ENCODE measurements at regions of chrX and their contacts with region 1.

Region 1: GRCh38 chrX:119729408-119730201 is 28.8 kb upstream of the SOWAHD start:
- DNase-seq: peak; percentile 31
- ATAC-seq: peak; percentile 77
- H3K4me3 ChIP-seq: no peak overlapping the region
- H3K27ac ChIP-seq: no peak overlapping the region
- H3K4me1 ChIP-seq: no peaks in the 10 kb centered on the region
- H3K27me3 ChIP-seq: no peaks in the 10 kb centered on the region
- CTCF ChIP-seq: peak; percentile 61 to 85 (median 76)
- EP300 ChIP-seq: no peak
- POLR2A ChIP-seq: no peak
- RAD21 ChIP-seq: peak; percentile 89

Region 2: GRCh38 chrX:119155416-119156035 is 574.1 kb before region 1 on chrX:
- CTCF ChIA-PET with region 1: no interaction called
- POLR2A ChIA-PET with region 1: no interaction called
- RAD21 ChIA-PET with region 1: no interaction called
- SMC1A ChIA-PET with region 1: no interaction called
- in situ Hi-C with region 1: no loop called
- intact Hi-C with region 1: no loop called
- DNase-seq: no peak
- ATAC-seq: no peak
- H3K4me3 ChIP-seq: no peak overlapping the region
- H3K27ac ChIP-seq: no peak overlapping the region
- H3K4me1 ChIP-seq: no peaks in the 10 kb centered on the region
- H3K27me3 ChIP-seq: no peaks in the 10 kb centered on the region
- CTCF ChIP-seq: no peak
- EP300 ChIP-seq: no peak
- POLR2A ChIP-seq: no peak
- RAD21 ChIP-seq: no peak

Region 3: GRCh38 chrX:119617517-119618164 is 112.0 kb before region 1 on chrX:
- CTCF ChIA-PET with region 1: interaction called, 163 read pairs
- POLR2A ChIA-PET with region 1: interaction called, 10 read pairs
- RAD21 ChIA-PET with region 1: interaction called, 42 read pairs
- SMC1A ChIA-PET with region 1: interaction called, 166 read pairs
- in situ Hi-C with region 1: loop called (anchors 5 kb)
- intact Hi-C with region 1: loop called (anchors 2 kb)
- DNase-seq: no peak
- ATAC-seq: peak; percentile 76
- H3K4me3 ChIP-seq: peak overlapping the region; percentile 29; the same call in 1 of the 2 replicates
- H3K27ac ChIP-seq: peak overlapping the region; percentile 54
- H3K4me1 ChIP-seq: peaks cover 30% of the 10 kb centered on the region
- H3K27me3 ChIP-seq: no peaks in the 10 kb centered on the region
- CTCF ChIP-seq: no peak
- EP300 ChIP-seq: no peak
- POLR2A ChIP-seq: 0 out of 2 replicates have a peak, but pooled peaks have one; percentile 4
- RAD21 ChIP-seq: no peak

Region 4: DNA sequence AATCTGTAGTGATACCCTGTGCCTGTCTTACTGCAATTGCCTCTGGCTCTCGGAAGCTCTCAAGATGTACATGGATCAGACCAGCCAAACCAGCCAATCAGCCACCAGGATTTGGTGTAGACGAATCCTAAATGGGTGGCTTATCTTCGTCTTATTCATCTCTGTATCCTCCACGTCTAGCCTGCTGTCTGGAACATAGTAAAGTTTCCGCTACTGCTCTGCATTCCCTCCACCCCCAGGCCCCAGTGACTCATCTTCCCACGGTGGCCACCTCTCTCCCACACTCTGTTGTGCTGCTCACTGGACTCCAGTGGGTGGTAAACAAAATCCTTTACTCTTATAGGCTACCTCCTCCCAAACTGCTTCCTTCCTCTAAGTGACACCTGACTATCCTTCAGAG is 74.5 kb before region 1 on chrX:
- CTCF ChIA-PET with region 1: interaction called, 15 read pairs
- POLR2A ChIA-PET with region 1: no interaction called
- RAD21 ChIA-PET with region 1: interaction called, 7 read pairs
- SMC1A ChIA-PET with region 1: interaction called, 16 read pairs
- in situ Hi-C with region 1: no loop called
- intact Hi-C with region 1: no loop called
- DNase-seq: no peak
- ATAC-seq: peak; percentile 74
- H3K4me3 ChIP-seq: no peak overlapping the region
- H3K27ac ChIP-seq: peak overlapping the region; percentile 23; the same call in 1 of the 2 replicates
- H3K4me1 ChIP-seq: peaks cover 7% of the 10 kb centered on the region
- H3K27me3 ChIP-seq: no peaks in the 10 kb centered on the region
- CTCF ChIP-seq: no peak
- EP300 ChIP-seq: no peak
- POLR2A ChIP-seq: no peak
- RAD21 ChIP-seq: no peak

Region 5: GRCh38 chrX:119685225-119686066 is 44.2 kb before region 1 on chrX:
- CTCF ChIA-PET with region 1: interaction called, 29 read pairs
- POLR2A ChIA-PET with region 1: interaction called, 23 read pairs
- RAD21 ChIA-PET with region 1: interaction called, 50 read pairs
- SMC1A ChIA-PET with region 1: interaction called, 34 read pairs
- in situ Hi-C with region 1: no loop called
- intact Hi-C with region 1: no loop called
- DNase-seq: no peak
- ATAC-seq: peak; percentile 56
- H3K4me3 ChIP-seq: peak overlapping the region; percentile 60; the same call in 1 of the 2 replicates
- H3K27ac ChIP-seq: peak overlapping the region; percentile 84
- H3K4me1 ChIP-seq: peaks cover 57% of the 10 kb centered on the region
- H3K27me3 ChIP-seq: no peaks in the 10 kb centered on the region
- CTCF ChIP-seq: no peak
- EP300 ChIP-seq: no peak
- POLR2A ChIP-seq: no peak
- RAD21 ChIP-seq: no peak

Region 6: GRCh38 chrX:119745283-119745848 is 15.8 kb after region 1 on chrX:
- CTCF ChIA-PET with region 1: interaction called, 23 read pairs
- POLR2A ChIA-PET with region 1: interaction called, 5 read pairs
- RAD21 ChIA-PET with region 1: interaction called, 7 read pairs
- SMC1A ChIA-PET with region 1: interaction called, 14 read pairs
- in situ Hi-C with region 1: no loop called
- intact Hi-C with region 1: no loop called
- DNase-seq: no peak
- ATAC-seq: no peak
- H3K4me3 ChIP-seq: no peak overlapping the region
- H3K27ac ChIP-seq: no peak overlapping the region
- H3K4me1 ChIP-seq: no peaks in the 10 kb centered on the region
- H3K27me3 ChIP-seq: no peaks in the 10 kb centered on the region
- CTCF ChIP-seq: no peak
- EP300 ChIP-seq: no peak
- POLR2A ChIP-seq: no peak
- RAD21 ChIP-seq: no peak

Region 7: DNA sequence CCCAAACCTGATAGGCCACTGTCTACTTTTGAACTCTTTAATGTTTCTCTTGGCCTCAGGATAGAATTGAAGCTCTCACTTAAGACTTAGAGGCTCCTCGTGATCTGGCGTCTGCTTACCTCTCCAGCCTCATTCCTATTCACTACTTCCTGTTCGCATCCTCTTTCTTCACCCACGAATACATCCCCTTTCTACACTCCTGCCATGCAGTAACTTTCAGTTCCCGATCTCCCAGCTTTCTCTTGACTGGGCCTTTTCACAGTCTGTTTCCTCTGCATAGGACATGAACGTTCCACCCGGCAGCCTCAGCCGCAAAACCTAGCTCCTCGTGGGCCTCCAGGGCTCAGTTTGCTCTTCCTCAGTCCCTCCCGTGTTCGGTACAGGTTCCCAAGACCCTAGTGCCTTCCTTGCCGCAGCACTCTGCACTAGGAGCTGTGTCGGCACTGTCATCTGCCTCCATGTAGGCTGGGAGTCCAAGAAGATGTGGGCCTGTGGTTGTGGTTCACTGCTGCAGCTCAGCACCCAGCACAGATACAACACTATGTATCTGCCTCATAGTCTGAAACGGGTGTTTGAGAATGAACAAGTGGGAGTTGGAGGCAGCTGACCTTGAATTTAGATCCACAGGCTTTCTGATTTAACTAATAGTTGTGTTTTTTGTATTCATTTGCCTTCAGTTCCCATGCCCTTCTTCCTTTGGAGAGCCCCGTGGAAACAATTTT is 46.1 kb after region 1 on chrX:
- CTCF ChIA-PET with region 1: interaction called, 33 read pairs
- POLR2A ChIA-PET with region 1: no interaction called
- RAD21 ChIA-PET with region 1: interaction called, 12 read pairs
- SMC1A ChIA-PET with region 1: interaction called, 33 read pairs
- in situ Hi-C with region 1: no loop called
- intact Hi-C with region 1: loop called (anchors 1 kb)
- DNase-seq: no peak
- ATAC-seq: peak; percentile 69
- H3K4me3 ChIP-seq: no peak overlapping the region
- H3K27ac ChIP-seq: peak overlapping the region; percentile 83
- H3K4me1 ChIP-seq: peaks cover 5% of the 10 kb centered on the region
- H3K27me3 ChIP-seq: no peaks in the 10 kb centered on the region
- CTCF ChIP-seq: no peak
- EP300 ChIP-seq: no peak
- POLR2A ChIP-seq: 0 out of 2 replicates have a peak, but pooled peaks have one; percentile 38
- RAD21 ChIP-seq: no peak